ENCODE measurements at regions of chrX and their contacts with region 1.

Region 1: GRCh38 chrX:50081282-50081889 is 119.4 kb downstream of the AKAP4 start:
- DNase-seq: peak; percentile 10
- ATAC-seq: peak; percentile 60
- H3K4me3 ChIP-seq: no peak overlapping the region
- H3K27ac ChIP-seq: no peak overlapping the region
- H3K4me1 ChIP-seq: no peaks in the 10 kb centered on the region
- H3K27me3 ChIP-seq: no peaks in the 10 kb centered on the region
- CTCF ChIP-seq: peak; percentile 71
- EP300 ChIP-seq: no peak
- POLR2A ChIP-seq: no peak
- RAD21 ChIP-seq: 0 out of 2 replicates have a peak, but pooled peaks have one; percentile 14

Region 2: DNA sequence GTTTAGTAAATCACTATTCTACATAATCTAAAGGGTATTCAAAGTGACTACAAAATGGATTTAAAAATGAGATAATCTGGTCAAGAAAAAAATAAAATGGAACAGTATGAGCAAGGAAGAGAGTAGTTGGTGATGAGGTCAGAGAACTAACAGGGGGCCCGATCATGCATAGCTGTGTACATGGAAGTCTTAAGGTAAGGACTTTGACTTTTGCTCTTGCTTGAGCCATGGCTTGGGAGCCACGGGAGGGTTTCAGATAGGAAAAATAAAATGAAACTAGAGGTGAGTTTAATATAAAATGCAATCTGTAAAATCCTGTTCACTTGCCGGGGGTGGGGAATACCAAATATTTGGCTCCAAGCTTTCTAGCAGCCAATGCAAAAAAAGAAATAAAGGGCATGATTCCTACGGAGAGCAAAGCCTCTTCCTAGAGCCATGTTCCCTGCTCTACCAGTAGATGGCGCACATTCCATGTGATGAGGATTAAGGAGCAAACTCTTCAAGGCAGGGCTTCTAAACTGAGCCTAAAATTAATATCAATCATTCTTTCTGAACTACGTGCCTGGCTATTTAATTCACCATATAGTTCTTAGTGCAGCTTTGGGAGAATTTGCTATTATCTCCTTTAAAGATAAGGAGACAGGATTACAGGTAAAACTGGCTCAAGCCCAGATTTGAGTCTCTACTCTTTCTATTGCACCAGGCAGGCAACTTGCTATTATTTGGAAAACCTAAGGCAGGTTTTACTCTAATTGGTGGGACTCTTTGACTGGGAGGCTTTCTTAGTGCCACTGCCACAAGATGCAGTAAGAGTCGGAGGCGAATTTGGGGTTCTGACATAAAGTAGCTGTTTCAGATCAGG is 165.8 kb before region 1 on chrX:
- CTCF ChIA-PET with region 1: interaction called, 6 read pairs
- POLR2A ChIA-PET with region 1: no interaction called
- in situ Hi-C with region 1: loop called (anchors 5 kb)
- intact Hi-C with region 1: loop called (anchors 1 kb)
- DNase-seq: peak; percentile 33
- ATAC-seq: peak; percentile 76
- H3K4me3 ChIP-seq: no peak overlapping the region
- H3K27ac ChIP-seq: no peak overlapping the region
- H3K4me1 ChIP-seq: peaks cover 34% of the 10 kb centered on the region
- H3K27me3 ChIP-seq: no peaks in the 10 kb centered on the region
- CTCF ChIP-seq: peak; percentile 75
- EP300 ChIP-seq: no peak
- POLR2A ChIP-seq: no peak
- RAD21 ChIP-seq: no peak

Region 3: DNA sequence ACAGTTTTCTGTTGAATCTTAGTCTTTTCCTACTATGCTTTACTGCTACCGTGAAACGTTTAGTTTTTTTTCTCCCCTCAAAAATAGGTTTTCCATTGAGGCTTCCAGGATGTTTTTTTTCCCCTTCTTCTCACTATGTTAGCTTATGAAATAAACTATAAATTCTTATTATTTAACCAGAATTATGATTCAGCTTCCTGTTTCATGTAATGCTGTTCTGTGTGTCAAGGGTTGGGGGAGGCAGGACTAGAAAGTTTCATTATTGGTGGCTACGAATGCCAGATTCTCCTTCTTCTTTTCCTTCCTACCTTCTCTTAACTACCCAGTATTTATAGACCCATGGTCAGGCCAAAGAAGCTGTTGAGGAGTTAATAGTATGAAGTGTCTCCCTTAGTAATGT is 147.2 kb before region 1 on chrX:
- CTCF ChIA-PET with region 1: no interaction called
- POLR2A ChIA-PET with region 1: no interaction called
- in situ Hi-C with region 1: no loop called
- intact Hi-C with region 1: no loop called
- DNase-seq: no peak
- ATAC-seq: no peak
- H3K4me3 ChIP-seq: no peak overlapping the region
- H3K27ac ChIP-seq: no peak overlapping the region
- H3K4me1 ChIP-seq: no peaks in the 10 kb centered on the region
- H3K27me3 ChIP-seq: no peaks in the 10 kb centered on the region
- CTCF ChIP-seq: no peak
- EP300 ChIP-seq: no peak
- POLR2A ChIP-seq: no peak
- RAD21 ChIP-seq: no peak

Region 4: GRCh38 chrX:50049228-50049627 is 32.2 kb before region 1 on chrX:
- CTCF ChIA-PET with region 1: no interaction called
- POLR2A ChIA-PET with region 1: no interaction called
- in situ Hi-C with region 1: no loop called
- intact Hi-C with region 1: no loop called
- DNase-seq: no peak
- ATAC-seq: no peak
- H3K4me3 ChIP-seq: no peak overlapping the region
- H3K27ac ChIP-seq: no peak overlapping the region
- H3K4me1 ChIP-seq: no peaks in the 10 kb centered on the region
- H3K27me3 ChIP-seq: no peaks in the 10 kb centered on the region
- CTCF ChIP-seq: no peak
- EP300 ChIP-seq: no peak
- POLR2A ChIP-seq: no peak
- RAD21 ChIP-seq: no peak

Region 5: DNA sequence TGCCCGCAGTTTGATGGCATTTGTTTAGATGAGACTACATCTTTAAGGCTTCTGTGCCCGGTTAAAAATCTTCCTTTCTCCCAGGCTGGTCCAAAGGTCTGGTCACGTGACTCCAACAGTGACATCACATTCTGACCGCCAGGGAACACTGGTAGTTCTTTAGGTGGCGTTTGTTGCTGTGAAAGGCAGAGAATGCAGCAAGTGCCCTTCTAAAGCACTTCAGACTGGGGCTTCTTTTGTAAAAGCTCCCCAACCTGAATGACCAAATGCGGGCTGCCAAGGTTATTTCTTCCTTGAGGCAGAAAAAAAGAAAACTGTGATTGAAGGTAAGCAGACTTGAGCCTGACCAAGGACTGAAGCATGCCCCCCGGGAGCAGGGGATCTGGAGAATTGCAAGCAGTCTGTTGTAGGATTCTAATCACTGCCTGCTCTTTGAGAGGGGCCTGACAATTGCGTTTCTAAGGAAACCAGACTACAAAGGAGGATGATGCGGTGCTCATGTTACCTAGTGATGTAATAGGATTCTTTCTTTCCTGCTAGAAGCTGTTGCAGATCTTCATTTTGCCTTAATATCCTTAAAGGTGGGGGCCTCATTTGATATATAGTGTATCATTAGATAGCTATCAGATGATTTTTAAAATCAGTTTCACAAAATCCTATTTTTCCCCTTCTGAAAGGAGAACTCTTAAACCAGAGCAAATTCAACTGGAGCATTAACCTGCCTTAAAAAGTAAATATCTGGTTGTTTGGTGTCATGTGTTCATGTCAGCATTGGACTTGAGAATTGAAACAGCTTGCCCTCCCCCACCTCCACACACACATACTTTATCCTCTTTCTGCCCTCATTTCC is 13.7 kb before region 1 on chrX:
- CTCF ChIA-PET with region 1: no interaction called
- POLR2A ChIA-PET with region 1: no interaction called
- in situ Hi-C with region 1: no loop called
- intact Hi-C with region 1: no loop called
- DNase-seq: peak; percentile 66
- ATAC-seq: peak; percentile 88
- H3K4me3 ChIP-seq: peak overlapping the region; percentile 48 to 71 (median 63)
- H3K27ac ChIP-seq: peak overlapping the region; percentile 83
- H3K4me1 ChIP-seq: peaks cover 55% of the 10 kb centered on the region
- H3K27me3 ChIP-seq: no peaks in the 10 kb centered on the region
- CTCF ChIP-seq: no peak
- EP300 ChIP-seq: no peak
- POLR2A ChIP-seq: no peak
- RAD21 ChIP-seq: no peak

Region 6: GRCh38 chrX:50152456-50152855 is 71.1 kb after region 1 on chrX:
- CTCF ChIA-PET with region 1: no interaction called
- POLR2A ChIA-PET with region 1: no interaction called
- in situ Hi-C with region 1: no loop called
- intact Hi-C with region 1: no loop called
- DNase-seq: no peak
- ATAC-seq: no peak
- H3K4me3 ChIP-seq: no peak overlapping the region
- H3K27ac ChIP-seq: peak overlapping the region; percentile 38
- H3K4me1 ChIP-seq: peaks cover 71% of the 10 kb centered on the region
- H3K27me3 ChIP-seq: no peaks in the 10 kb centered on the region
- CTCF ChIP-seq: no peak
- EP300 ChIP-seq: no peak
- POLR2A ChIP-seq: no peak
- RAD21 ChIP-seq: no peak

Measured in HepG2 (cell line).